ENCODE measurements at regions of chr4 and their contacts with region 1.

Region 1: DNA sequence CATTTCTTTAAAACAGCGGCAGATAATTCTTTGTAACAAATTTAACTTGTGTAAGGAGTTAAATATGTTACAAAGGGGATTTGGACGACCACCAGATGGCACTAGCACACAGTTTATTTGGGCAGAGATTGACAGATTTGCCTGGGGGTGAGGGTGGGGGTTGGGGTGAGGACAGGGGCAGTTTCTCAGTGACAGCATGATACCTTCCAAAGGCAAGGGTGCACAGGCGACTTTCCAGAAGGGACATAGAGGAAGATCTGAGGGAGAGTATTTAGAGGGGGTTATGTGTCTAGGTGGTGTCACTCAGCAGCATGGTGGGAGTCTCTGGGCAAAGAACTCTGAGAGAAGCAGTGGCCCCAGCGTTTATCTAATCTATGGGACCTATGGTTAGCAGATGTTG is 9.6 kb upstream of the TMA16 start:
- DNase-seq: peak; percentile 73
- ATAC-seq: peak; percentile 55
- H3K4me3 Mint-ChIP-seq: no peak overlapping the region
- H3K27ac Mint-ChIP-seq: no peak overlapping the region
- H3K4me1 Mint-ChIP-seq: no peaks in the 10 kb centered on the region
- H3K27me3 Mint-ChIP-seq: peaks cover 4% of the 10 kb centered on the region

Region 2: GRCh38 chr4:162707962-162708361 is 776.9 kb before region 1 on chr4:
- CTCF ChIA-PET with region 1: no interaction called
- POLR2A ChIA-PET with region 1: no interaction called
- intact Hi-C with region 1: no loop called
- DNase-seq: no peak
- ATAC-seq: no peak
- H3K4me3 Mint-ChIP-seq: no peak overlapping the region
- H3K27ac Mint-ChIP-seq: no peak overlapping the region
- H3K4me1 Mint-ChIP-seq: no peaks in the 10 kb centered on the region
- H3K27me3 Mint-ChIP-seq: no peaks in the 10 kb centered on the region

Region 3: DNA sequence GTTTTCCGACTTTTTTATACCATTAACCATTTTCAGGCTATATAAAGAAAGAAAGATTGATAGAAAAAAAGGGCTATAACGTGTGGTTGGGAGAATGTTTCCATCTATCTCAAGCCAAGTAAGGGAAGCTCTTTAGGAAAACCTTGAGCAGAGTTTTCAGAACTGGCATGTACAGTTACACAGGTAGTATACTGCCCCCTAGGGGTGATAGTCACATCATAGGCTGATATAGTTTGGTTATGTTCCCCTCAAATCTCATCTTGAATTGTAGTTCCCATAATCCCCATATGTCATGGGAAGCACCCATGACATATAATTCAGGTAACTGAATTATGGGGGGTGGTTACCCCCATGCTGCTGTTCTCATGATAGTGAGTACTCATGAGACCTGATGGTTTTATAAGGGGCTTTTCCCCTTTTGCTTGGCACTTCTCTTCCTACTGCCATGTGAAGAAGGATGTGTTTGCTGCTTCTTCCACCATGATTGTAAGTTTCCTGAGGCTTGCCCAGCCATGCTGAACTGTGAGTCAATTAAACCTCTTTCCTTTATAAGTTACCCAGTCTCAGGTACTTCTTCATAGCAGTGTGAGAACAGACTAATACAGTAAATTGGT is 196.4 kb after region 1 on chr4:
- CTCF ChIA-PET with region 1: interaction called, 3 read pairs
- POLR2A ChIA-PET with region 1: no interaction called
- intact Hi-C with region 1: loop called (anchors 5 to 10 kb)
- DNase-seq: peak; percentile 13
- ATAC-seq: peak; percentile 74
- H3K4me3 Mint-ChIP-seq: no peak overlapping the region
- H3K27ac Mint-ChIP-seq: no peak overlapping the region
- H3K4me1 Mint-ChIP-seq: no peaks in the 10 kb centered on the region
- H3K27me3 Mint-ChIP-seq: no peaks in the 10 kb centered on the region

Region 4: DNA sequence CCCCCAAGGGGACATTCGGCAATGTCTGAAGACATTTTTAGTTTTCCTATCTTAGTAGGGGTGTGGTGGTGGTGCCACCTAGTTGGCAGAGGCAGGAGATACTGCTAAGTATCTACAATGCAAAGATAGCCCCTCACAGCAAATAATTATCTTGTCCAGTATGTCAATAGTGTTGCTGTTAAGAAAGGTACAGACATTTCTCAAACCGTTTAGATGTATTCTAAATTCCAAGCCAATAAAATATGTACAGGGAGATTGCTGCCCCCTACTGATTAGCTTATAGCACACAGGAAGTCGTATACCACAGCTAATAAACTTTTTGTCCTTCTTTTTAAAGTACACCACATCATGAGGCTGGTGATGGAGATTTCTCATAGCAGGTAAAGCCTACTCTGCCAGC is 270.1 kb after region 1 on chr4:
- CTCF ChIA-PET with region 1: no interaction called
- POLR2A ChIA-PET with region 1: no interaction called
- intact Hi-C with region 1: loop called in 1 of 2 experiments (anchors 2 kb)
- DNase-seq: no peak
- ATAC-seq: peak; percentile 42
- H3K4me3 Mint-ChIP-seq: no peak overlapping the region
- H3K27ac Mint-ChIP-seq: no peak overlapping the region
- H3K4me1 Mint-ChIP-seq: peaks cover 2% of the 10 kb centered on the region
- H3K27me3 Mint-ChIP-seq: peaks cover under 1% of the 10 kb centered on the region

Region 5: DNA sequence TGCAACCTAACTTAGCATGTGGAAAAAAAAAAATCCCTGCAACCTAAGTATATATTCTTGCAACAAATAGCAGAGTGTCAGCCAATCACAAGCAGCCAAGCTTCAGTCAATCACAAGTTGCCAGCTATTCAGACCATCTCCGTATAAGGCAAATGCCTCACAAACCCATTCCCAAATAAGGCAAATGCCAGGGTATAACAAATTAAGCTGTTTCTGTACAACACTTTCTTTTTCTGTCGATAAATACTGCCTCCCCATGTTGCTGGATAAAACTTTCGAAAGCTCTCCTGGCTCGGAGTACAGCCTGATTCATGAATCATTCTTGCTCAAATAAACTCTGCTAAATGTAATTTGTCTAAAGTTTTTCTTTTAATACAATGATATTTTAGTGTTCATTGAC is 808.3 kb after region 1 on chr4:
- CTCF ChIA-PET with region 1: no interaction called
- POLR2A ChIA-PET with region 1: no interaction called
- intact Hi-C with region 1: no loop called
- DNase-seq: no peak
- ATAC-seq: no peak
- H3K4me3 Mint-ChIP-seq: no peak overlapping the region
- H3K27ac Mint-ChIP-seq: no peak overlapping the region
- H3K4me1 Mint-ChIP-seq: no peaks in the 10 kb centered on the region
- H3K27me3 Mint-ChIP-seq: no peaks in the 10 kb centered on the region